CD14-positive monocyte (primary cell): ENCODE measurements at regions of chr7 and their contacts with region 1.

Region 1: GRCh38 chr7:37176079-37176478 is 272.6 kb downstream of the ELMO1 start:
- DNase-seq: no peak
- H3K4me3 ChIP-seq: no peak overlapping the region
- H3K4me3 Mint-ChIP-seq: no peak overlapping the region
- H3K27ac ChIP-seq: no peak overlapping the region
- H3K27ac Mint-ChIP-seq: no peak overlapping the region
- H3K4me1 ChIP-seq: no peaks in the 10 kb centered on the region
- H3K4me1 Mint-ChIP-seq: no peaks in the 10 kb centered on the region
- H3K27me3 ChIP-seq: no peaks in the 10 kb centered on the region
- H3K27me3 Mint-ChIP-seq: peaks cover 0 to 1% (median 0%) of the 10 kb centered on the region in 3 donors
- CTCF ChIP-seq: no peak

Region 2: GRCh38 chr7:36487756-36488336 is 688.2 kb before region 1 on chr7:
- intact Hi-C with region 1: loop called (anchors 5 kb)
- DNase-seq: peak; percentile 12 to 38 (median 24)
- H3K4me3 ChIP-seq: no peak overlapping the region
- H3K4me3 Mint-ChIP-seq: no peak overlapping the region
- H3K27ac ChIP-seq: no peak overlapping the region
- H3K27ac Mint-ChIP-seq: no peak overlapping the region
- H3K4me1 ChIP-seq: no peaks in the 10 kb centered on the region
- H3K4me1 Mint-ChIP-seq: no peaks in the 10 kb centered on the region
- H3K27me3 ChIP-seq: no peaks in the 10 kb centered on the region
- H3K27me3 Mint-ChIP-seq: no peaks in the 10 kb centered on the region
- CTCF ChIP-seq: peak; percentile 52

Region 3: GRCh38 chr7:37052705-37053104 is 123.4 kb before region 1 on chr7:
- intact Hi-C with region 1: no loop called
- DNase-seq: no peak
- H3K4me3 ChIP-seq: no peak overlapping the region
- H3K4me3 Mint-ChIP-seq: no peak overlapping the region
- H3K27ac ChIP-seq: no peak overlapping the region
- H3K27ac Mint-ChIP-seq: no peak overlapping the region
- H3K4me1 ChIP-seq: no peaks in the 10 kb centered on the region
- H3K4me1 Mint-ChIP-seq: no peaks in the 10 kb centered on the region
- H3K27me3 ChIP-seq: no peaks in the 10 kb centered on the region
- H3K27me3 Mint-ChIP-seq: no peaks in the 10 kb centered on the region
- CTCF ChIP-seq: no peak

Region 4: DNA sequence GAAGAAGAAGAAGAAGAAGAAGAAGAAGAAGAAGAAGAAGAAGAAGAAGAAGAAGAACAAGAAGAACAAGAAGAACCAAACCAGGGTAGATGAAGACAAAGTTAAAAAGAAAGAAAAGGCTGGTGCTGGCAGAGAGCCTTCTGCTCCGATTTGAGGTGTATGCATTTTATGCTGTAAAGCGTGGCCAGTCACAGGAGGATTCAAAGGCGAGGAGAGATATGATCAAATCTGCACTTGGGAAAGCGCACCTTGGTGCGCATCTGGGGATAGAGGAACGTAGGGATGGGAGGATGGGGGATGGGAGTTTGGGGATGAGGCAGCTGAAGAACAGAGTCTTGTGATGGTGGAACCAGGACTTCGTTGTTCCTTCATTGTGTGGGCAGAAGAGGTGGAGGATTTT is 672.2 kb after region 1 on chr7 and contains the start of gene NME8:
- intact Hi-C with region 1: no loop called
- DNase-seq: no peak
- H3K4me3 ChIP-seq: no peak within 1 kb of the TSS
- H3K4me3 Mint-ChIP-seq: no peak within 1 kb of the TSS
- H3K27ac ChIP-seq: peak within 1 kb of the TSS in 1 of 2 donors; percentile 48
- H3K27ac Mint-ChIP-seq: peak within 1 kb of the TSS in 6 of 7 donors; percentile 20 to 84 (median 49)
- H3K4me1 ChIP-seq: no peaks in the 10 kb centered on the region
- H3K4me1 Mint-ChIP-seq: no peaks in the 10 kb centered on the region
- H3K27me3 ChIP-seq: no peaks in the 10 kb centered on the region
- H3K27me3 Mint-ChIP-seq: peaks cover 0 to 1% (median 0%) of the 10 kb centered on the region in 3 donors
- CTCF ChIP-seq: no peak
- polyA plus RNA-seq, gene NME8: 3.2 to 8.8 (median 4.8) TPM